Esophagus squamous epithelium (tissue), 5 donors: ENCODE measurements at regions of chr3 and their contacts with region 1.

Region 1: GRCh38 chr3:49093853-49094767 is at the start of gene QRICH1:
- DNase-seq: peak; percentile 97
- H3K4me3 ChIP-seq: peak within 1 kb of the TSS; percentile 72 to 96 (median 85)
- H3K27ac ChIP-seq: peak within 1 kb of the TSS; percentile 92 to 99 (median 98)
- H3K4me1 ChIP-seq: peaks cover 8 to 57% (median 36%) of the 10 kb centered on the region in 3 donors
- H3K27me3 ChIP-seq: no peaks in the 10 kb centered on the region
- CTCF ChIP-seq: peak; percentile 24 to 57 (median 42)
- POLR2A ChIP-seq: peak in 3 of 4 donors; percentile 62 to 87 (median 64)
- total RNA-seq, gene QRICH1: 36.8 to 85.6 (median 49.1) TPM

Region 2: GRCh38 chr3:49021813-49022687 is 72.1 kb before region 1 on chr3 and contains the start of gene NDUFAF3:
- intact Hi-C with region 1: loop called (anchors 10 kb)
- DNase-seq: peak; percentile 77
- H3K4me3 ChIP-seq: peak within 1 kb of the TSS; percentile 66 to 99 (median 93)
- H3K27ac ChIP-seq: peak within 1 kb of the TSS; percentile 97 to 100 (median 99)
- H3K4me1 ChIP-seq: peaks cover 36 to 82% (median 37%) of the 10 kb centered on the region in 3 donors
- H3K27me3 ChIP-seq: no peaks in the 10 kb centered on the region
- CTCF ChIP-seq: peak; percentile 92 to 98 (median 96)
- POLR2A ChIP-seq: peak in 2 of 4 donors; percentile 88 to 89
- total RNA-seq, gene NDUFAF3: 50.8 to 88.1 (median 54.1) TPM

Region 3: DNA sequence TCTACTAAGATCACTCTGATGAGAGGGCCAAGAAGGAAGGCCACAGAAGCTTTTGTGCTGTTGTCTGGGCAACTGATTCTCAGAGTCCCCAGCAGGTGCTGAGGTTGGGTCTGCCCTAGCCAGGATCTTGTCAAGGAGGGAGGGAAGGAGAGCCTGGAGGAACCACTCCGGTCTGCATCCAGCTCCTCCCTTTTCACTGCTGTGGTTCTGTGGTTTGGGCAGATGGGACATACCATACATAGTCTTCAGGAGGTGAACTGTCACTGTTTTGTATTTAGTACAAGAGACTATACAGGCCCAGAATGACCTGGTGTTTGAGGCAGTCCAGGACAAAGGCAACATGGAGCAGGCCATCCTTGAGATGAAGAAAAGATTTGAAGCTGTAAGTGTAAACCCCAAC is 161.0 kb after region 1 on chr3:
- intact Hi-C with region 1: no loop called
- DNase-seq: no peak
- H3K4me3 ChIP-seq: no peak overlapping the region
- H3K27ac ChIP-seq: no peak overlapping the region
- H3K4me1 ChIP-seq: peaks cover 0 to 19% (median 0%) of the 10 kb centered on the region in 3 donors
- H3K27me3 ChIP-seq: no peaks in the 10 kb centered on the region
- CTCF ChIP-seq: no peak
- POLR2A ChIP-seq: no peak